Naive thymus-derived CD4-positive, alpha-beta T cell (primary cell): ENCODE measurements at regions of chr1 and their contacts with region 1.

Region 1: GRCh38 chr1:185681034-185681633 is 53.1 kb upstream of the HMCN1 start:
- DNase-seq: peak in 6 of 9 donors; percentile 19 to 53 (median 40)
- ATAC-seq: peak; percentile 65
- H3K4me3 ChIP-seq: no peak overlapping the region
- H3K4me3 Mint-ChIP-seq: peak overlapping the region in 2 of 10 donors; percentile 12 to 39
- H3K27ac ChIP-seq: no peak overlapping the region
- H3K27ac Mint-ChIP-seq: peak overlapping the region in 1 of 9 donors; percentile 14
- H3K4me1 ChIP-seq: peaks cover 4 to 13% of the 10 kb centered on the region in 2 donors
- H3K4me1 Mint-ChIP-seq: peaks cover 13 to 41% (median 28%) of the 10 kb centered on the region in 7 donors
- H3K27me3 ChIP-seq: no peaks in the 10 kb centered on the region
- H3K27me3 Mint-ChIP-seq: peaks cover 0 to 16% (median 0%) of the 10 kb centered on the region in 5 donors

Region 2: GRCh38 chr1:184982002-184982954 is 698.9 kb before region 1 on chr1:
- CTCF ChIA-PET with region 1: interaction called, 4 read pairs
- POLR2A ChIA-PET with region 1: no interaction called
- intact Hi-C with region 1: loop called (anchors 5 kb)
- DNase-seq: peak; percentile 28 to 69 (median 47)
- ATAC-seq: peak; percentile 99
- H3K4me3 ChIP-seq: no peak overlapping the region
- H3K4me3 Mint-ChIP-seq: no peak overlapping the region
- H3K27ac ChIP-seq: no peak overlapping the region
- H3K27ac Mint-ChIP-seq: no peak overlapping the region
- H3K4me1 ChIP-seq: no peaks in the 10 kb centered on the region
- H3K4me1 Mint-ChIP-seq: peaks cover 0 to 7% (median 0%) of the 10 kb centered on the region in 7 donors
- H3K27me3 ChIP-seq: no peaks in the 10 kb centered on the region
- H3K27me3 Mint-ChIP-seq: peaks cover 17 to 45% (median 29%) of the 10 kb centered on the region in 5 donors

Region 3: GRCh38 chr1:185170291-185170848 is 510.8 kb before region 1 on chr1:
- CTCF ChIA-PET with region 1: interaction called, 22 read pairs
- POLR2A ChIA-PET with region 1: interaction called, 3 read pairs
- intact Hi-C with region 1: loop called in 1 of 2 experiments (anchors 1 kb)
- DNase-seq: peak in 8 of 9 donors; percentile 37 to 71 (median 65)
- ATAC-seq: peak; percentile 84
- H3K4me3 ChIP-seq: no peak overlapping the region
- H3K4me3 Mint-ChIP-seq: peak overlapping the region in 4 of 10 donors; percentile 35 to 56 (median 53)
- H3K27ac ChIP-seq: no peak overlapping the region
- H3K27ac Mint-ChIP-seq: peak overlapping the region in 4 of 9 donors; percentile 6 to 62 (median 43)
- H3K4me1 ChIP-seq: peaks cover 0 to 4% of the 10 kb centered on the region in 2 donors
- H3K4me1 Mint-ChIP-seq: peaks cover 0 to 17% (median 5%) of the 10 kb centered on the region in 7 donors
- H3K27me3 ChIP-seq: no peaks in the 10 kb centered on the region
- H3K27me3 Mint-ChIP-seq: no peaks in the 10 kb centered on the region

Region 4: GRCh38 chr1:185694081-185694480 is 12.9 kb after region 1 on chr1:
- CTCF ChIA-PET with region 1: interaction called, 8 read pairs
- POLR2A ChIA-PET with region 1: interaction called, 5 read pairs
- intact Hi-C with region 1: loop called in 1 of 2 experiments (anchors 1 kb)
- DNase-seq: peak in 4 of 9 donors; percentile 20 to 26 (median 22)
- ATAC-seq: peak; percentile 60
- H3K4me3 ChIP-seq: peak overlapping the region; percentile 31
- H3K4me3 Mint-ChIP-seq: peak overlapping the region; percentile 73 to 85 (median 78)
- H3K27ac ChIP-seq: peak overlapping the region; percentile 50
- H3K27ac Mint-ChIP-seq: peak overlapping the region; percentile 77 to 96 (median 88)
- H3K4me1 ChIP-seq: peaks cover 0 to 17% of the 10 kb centered on the region in 2 donors
- H3K4me1 Mint-ChIP-seq: peaks cover 11 to 27% (median 14%) of the 10 kb centered on the region in 7 donors
- H3K27me3 ChIP-seq: no peaks in the 10 kb centered on the region
- H3K27me3 Mint-ChIP-seq: peaks cover 0 to 27% (median 9%) of the 10 kb centered on the region in 5 donors